Ovary (tissue), 10 donors: ENCODE measurements at regions of chr13 and their contacts with region 1.

Region 1: GRCh38 chr13:97322740-97323342 is 100.7 kb downstream of the MBNL2 start:
- DNase-seq: no peak
- H3K4me3 ChIP-seq: no peak overlapping the region
- H3K27ac ChIP-seq: no peak overlapping the region
- H3K4me1 ChIP-seq: peaks cover 14% of the 10 kb centered on the region
- H3K27me3 ChIP-seq: no peaks in the 10 kb centered on the region
- CTCF ChIP-seq: no peak
- EP300 ChIP-seq: no peak
- POLR2A ChIP-seq: no peak

Region 2: DNA sequence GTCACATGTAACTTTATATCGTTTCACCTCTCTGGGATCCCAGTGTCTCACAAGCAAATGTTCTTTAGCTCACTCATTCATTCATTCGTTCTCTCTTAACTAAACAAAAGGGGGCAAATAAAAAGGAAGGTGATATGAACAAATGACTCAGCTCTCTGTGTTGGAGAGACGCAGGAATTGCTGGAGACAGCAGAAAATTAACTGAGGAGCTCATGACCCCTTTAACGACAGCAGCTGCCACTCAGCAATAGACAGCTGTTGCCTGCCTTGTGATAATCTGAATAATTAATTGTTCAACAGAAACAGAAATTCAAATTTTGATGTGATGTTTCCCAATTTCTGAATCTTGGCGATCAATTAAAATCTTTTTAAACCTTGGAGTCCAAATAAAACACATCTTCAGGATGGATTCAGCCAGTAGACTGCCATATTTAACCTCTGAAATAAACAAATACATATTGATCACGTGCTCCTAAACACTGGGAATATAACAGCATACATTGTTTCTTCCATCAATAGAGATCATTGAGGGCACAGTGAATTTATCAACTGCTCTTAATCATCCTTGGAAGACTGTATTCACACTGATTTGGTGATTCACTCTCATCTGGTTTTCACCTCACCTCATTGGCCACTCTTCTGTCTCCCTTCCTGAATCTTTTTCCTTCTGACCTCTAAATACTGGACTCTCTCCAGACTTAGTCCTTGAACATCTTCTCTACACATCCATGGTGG is 37.5 kb before region 1 on chr13:
- intact Hi-C with region 1: loop called in 1 of 4 experiments (anchors 5 kb)
- DNase-seq: no peak
- H3K4me3 ChIP-seq: no peak overlapping the region
- H3K27ac ChIP-seq: no peak overlapping the region
- H3K4me1 ChIP-seq: peaks cover 15% of the 10 kb centered on the region
- H3K27me3 ChIP-seq: no peaks in the 10 kb centered on the region
- CTCF ChIP-seq: no peak
- EP300 ChIP-seq: no peak
- POLR2A ChIP-seq: no peak

Region 3: DNA sequence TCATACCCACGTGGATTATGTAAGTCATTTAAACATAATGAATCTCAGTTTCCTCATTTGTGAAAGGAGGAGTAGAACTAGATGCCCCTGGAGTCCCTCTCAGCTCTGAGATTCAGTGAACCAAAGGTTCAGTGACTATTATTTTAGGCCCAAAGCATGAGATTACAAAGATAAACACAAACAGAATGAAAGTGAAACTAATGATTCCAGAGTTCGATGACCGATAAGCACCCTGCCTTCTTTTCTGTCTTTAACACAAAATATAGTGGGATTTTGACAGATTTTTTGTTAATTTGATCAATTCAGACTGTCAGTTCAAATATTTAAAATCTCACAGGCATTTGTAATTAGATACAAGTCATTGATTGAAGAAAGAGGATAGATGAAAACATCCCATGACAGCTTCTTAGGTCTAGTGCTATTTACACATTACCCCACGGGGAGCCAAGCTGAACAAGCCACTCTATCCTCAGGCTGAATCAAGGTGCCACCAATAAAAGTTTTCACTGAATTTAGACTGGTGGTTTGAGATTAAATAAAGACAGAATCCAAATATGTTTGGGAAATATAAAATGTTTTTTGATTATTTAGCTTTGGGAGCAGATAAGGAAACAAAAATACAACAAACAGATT is 46.5 kb after region 1 on chr13:
- intact Hi-C with region 1: no loop called
- DNase-seq: no peak
- H3K4me3 ChIP-seq: peak overlapping the region; percentile 7
- H3K27ac ChIP-seq: no peak overlapping the region
- H3K4me1 ChIP-seq: no peaks in the 10 kb centered on the region
- H3K27me3 ChIP-seq: no peaks in the 10 kb centered on the region
- CTCF ChIP-seq: no peak
- EP300 ChIP-seq: no peak
- POLR2A ChIP-seq: no peak

Region 4: GRCh38 chr13:97422118-97423054 is 99.5 kb after region 1 on chr13:
- intact Hi-C with region 1: no loop called
- DNase-seq: no peak
- H3K4me3 ChIP-seq: no peak overlapping the region
- H3K27ac ChIP-seq: no peak overlapping the region
- H3K4me1 ChIP-seq: no peaks in the 10 kb centered on the region
- H3K27me3 ChIP-seq: no peaks in the 10 kb centered on the region
- CTCF ChIP-seq: no peak
- EP300 ChIP-seq: no peak
- POLR2A ChIP-seq: no peak

Region 5: GRCh38 chr13:97736436-97736835 is 413.6 kb after region 1 on chr13:
- intact Hi-C with region 1: no loop called
- DNase-seq: no peak
- H3K4me3 ChIP-seq: no peak overlapping the region
- H3K27ac ChIP-seq: no peak overlapping the region
- H3K4me1 ChIP-seq: no peaks in the 10 kb centered on the region
- H3K27me3 ChIP-seq: no peaks in the 10 kb centered on the region
- CTCF ChIP-seq: no peak
- EP300 ChIP-seq: no peak
- POLR2A ChIP-seq: no peak